ENCODE measurements at regions of chr3 and their contacts with region 1.

Region 1: DNA sequence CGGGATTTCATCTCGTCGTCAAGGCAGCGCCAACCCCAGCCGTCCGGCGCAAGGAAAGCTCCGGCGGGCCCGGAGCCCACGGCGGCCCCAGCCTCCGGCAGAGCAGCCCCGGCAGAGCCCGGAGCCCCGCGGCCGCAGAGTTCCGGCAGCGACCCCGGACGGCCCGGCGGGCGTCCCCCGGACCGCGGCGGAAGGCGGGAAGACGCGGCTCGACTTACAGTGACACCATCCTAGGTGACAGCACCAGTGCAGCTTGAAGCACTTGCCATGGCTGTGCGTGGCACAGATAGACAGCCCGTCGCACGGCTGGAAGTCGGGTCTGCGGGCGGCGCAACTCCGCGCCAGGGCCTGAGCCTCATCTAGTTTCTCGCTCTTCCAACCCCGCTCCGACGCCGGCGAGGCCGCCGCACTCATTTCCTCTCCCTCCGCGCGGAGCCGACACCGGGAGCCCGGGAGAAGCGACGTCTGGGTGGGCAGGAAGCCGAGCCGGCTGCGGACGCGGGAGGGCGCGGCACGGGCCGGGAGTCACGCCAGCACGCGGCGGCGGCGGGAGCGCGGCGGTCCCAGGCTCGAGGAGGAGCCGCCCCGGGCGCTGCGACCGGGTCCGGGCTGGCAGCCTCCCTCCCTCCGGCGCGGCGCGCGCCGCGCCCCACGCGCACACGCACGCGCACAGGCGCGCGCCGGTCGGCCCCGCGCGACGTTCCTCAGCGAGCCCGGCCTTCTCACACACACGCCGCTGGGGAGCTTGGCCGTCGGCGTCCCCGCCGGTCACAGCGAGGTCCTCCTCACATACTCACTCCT is at the start of gene C3orf70:
- DNase-seq: no peak
- H3K4me3 ChIP-seq: no peak within 1 kb of the TSS
- H3K27ac ChIP-seq: no peak within 1 kb of the TSS
- H3K4me1 ChIP-seq: no peaks in the 10 kb centered on the region
- CTCF ChIP-seq: no peak
- total RNA-seq, gene C3orf70: not detected in 2 replicates

Region 2: GRCh38 chr3:185009650-185010049 is 143.0 kb before region 1 on chr3:
- CTCF ChIA-PET with region 1: no interaction called
- POLR2A ChIA-PET with region 1: interaction called, 10 read pairs
- intact Hi-C with region 1: no loop called
- DNase-seq: no peak
- H3K4me3 ChIP-seq: no peak overlapping the region
- H3K27ac ChIP-seq: no peak overlapping the region
- H3K4me1 ChIP-seq: no peaks in the 10 kb centered on the region
- CTCF ChIP-seq: no peak